ENCODE measurements at regions of chr15 and their contacts with region 1.

Region 1: GRCh38 chr15:89321521-89322410 is 12.9 kb downstream of the POLG start:
- DNase-seq: no peak
- ATAC-seq: no peak
- H3K4me3 Mint-ChIP-seq: no peak overlapping the region
- H3K27ac Mint-ChIP-seq: peak overlapping the region; percentile 8
- H3K4me1 Mint-ChIP-seq: peaks cover 14% of the 10 kb centered on the region
- H3K27me3 Mint-ChIP-seq: no peaks in the 10 kb centered on the region
- CTCF ChIP-seq: no peak

Region 2: GRCh38 chr15:89197503-89197971 is 124.2 kb before region 1 on chr15:
- CTCF ChIA-PET with region 1: no interaction called
- POLR2A ChIA-PET with region 1: no interaction called
- intact Hi-C with region 1: no loop called
- DNase-seq: peak; percentile 30
- ATAC-seq: peak; percentile 90
- H3K4me3 Mint-ChIP-seq: no peak overlapping the region
- H3K27ac Mint-ChIP-seq: peak overlapping the region; percentile 80
- H3K4me1 Mint-ChIP-seq: peaks cover 11% of the 10 kb centered on the region
- H3K27me3 Mint-ChIP-seq: no peaks in the 10 kb centered on the region
- CTCF ChIP-seq: no peak

Region 3: DNA sequence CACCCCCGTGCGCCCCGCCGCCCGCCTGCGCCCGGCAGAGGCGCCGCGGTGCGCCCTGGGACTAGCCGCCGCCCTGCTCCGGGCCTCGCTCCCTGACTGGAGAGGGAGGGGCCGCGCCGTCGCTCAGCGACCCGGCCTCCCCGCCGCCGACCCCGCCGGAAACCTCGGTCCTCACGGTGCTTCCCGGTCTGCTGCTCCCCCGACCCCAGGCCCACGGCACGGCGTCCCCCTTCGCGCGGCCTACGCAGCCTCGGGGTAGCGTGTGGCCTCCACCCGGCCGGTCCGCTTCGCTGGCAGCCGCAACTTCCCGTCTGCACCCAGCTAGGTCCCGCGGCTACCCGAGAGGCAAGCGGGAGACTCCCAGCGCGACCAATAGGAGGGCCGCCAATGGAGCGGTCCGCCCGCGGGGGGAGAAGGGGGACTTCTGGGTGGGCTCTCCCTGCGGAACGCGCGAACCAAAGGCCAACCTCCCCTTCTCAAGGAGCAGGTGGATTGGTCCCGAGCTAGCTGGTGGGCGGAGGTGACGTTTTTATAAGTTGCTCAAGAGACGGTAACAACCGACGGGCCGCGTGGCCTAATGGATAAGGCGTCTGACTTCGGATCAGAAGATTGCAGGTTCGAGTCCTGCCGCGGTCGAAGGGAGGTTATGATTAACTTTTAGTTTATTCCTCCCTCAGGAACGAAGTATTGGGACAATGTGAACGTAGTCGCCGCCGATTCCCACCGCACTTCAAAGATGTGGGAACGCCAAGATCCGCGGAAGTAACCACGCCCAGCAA is 12.9 kb after region 1 on chr15 and contains the start of gene POLG:
- CTCF ChIA-PET with region 1: interaction called, 10 read pairs
- POLR2A ChIA-PET with region 1: interaction called, 128 read pairs
- intact Hi-C with region 1: no loop called
- DNase-seq: peak; percentile 98
- ATAC-seq: peak; percentile 93
- H3K4me3 Mint-ChIP-seq: peak within 1 kb of the TSS; percentile 78
- H3K27ac Mint-ChIP-seq: peak within 1 kb of the TSS; percentile 80
- H3K4me1 Mint-ChIP-seq: peaks cover 60% of the 10 kb centered on the region
- H3K27me3 Mint-ChIP-seq: peaks cover 2% of the 10 kb centered on the region
- CTCF ChIP-seq: no peak
- total RNA-seq, gene POLG: 101 to 106 TPM

Measured in activated CD8-positive, alpha-beta T cell treated with anti-CD3 and anti-CD28 coated beads for 36 hours (primary cell).